Calu3 (cell line): ENCODE measurements at regions of chr10 and their contacts with region 1.

Region 1: GRCh38 chr10:9814285-9814864 is 1203.3 kb upstream of the CELF2 start:
- DNase-seq: no peak
- H3K4me3 Mint-ChIP-seq: no peak overlapping the region
- H3K27ac Mint-ChIP-seq: no peak overlapping the region
- H3K4me1 Mint-ChIP-seq: no peaks in the 10 kb centered on the region
- H3K27me3 Mint-ChIP-seq: no peaks in the 10 kb centered on the region
- CTCF ChIP-seq: no peak

Region 2: DNA sequence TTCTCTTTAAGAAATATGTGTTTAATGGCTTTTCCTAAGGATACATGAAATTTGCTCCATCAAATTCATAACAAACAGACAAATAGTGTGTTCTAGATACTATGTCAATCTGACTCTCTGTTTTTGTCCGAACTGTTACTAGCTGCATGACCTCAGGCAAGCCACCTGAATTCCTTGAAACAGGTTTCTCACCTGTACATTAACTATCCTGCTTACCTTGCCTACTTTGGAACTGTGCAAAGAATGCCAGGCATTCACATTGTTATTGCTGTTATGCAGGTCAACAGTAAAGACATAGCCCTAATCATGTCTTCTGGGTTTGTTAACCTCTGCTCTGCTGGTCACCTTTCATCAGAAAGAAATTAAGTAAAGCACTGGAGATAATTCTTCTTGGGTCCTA is 80.6 kb before region 1 on chr10:
- CTCF ChIA-PET with region 1: no interaction called
- intact Hi-C with region 1: no loop called
- DNase-seq: no peak
- H3K4me3 Mint-ChIP-seq: no peak overlapping the region
- H3K27ac Mint-ChIP-seq: no peak overlapping the region
- H3K4me1 Mint-ChIP-seq: no peaks in the 10 kb centered on the region
- H3K27me3 Mint-ChIP-seq: no peaks in the 10 kb centered on the region
- CTCF ChIP-seq: no peak

Region 3: GRCh38 chr10:9766757-9767156 is 47.6 kb before region 1 on chr10:
- CTCF ChIA-PET with region 1: no interaction called
- intact Hi-C with region 1: no loop called
- DNase-seq: no peak
- H3K4me3 Mint-ChIP-seq: no peak overlapping the region
- H3K27ac Mint-ChIP-seq: no peak overlapping the region
- H3K4me1 Mint-ChIP-seq: no peaks in the 10 kb centered on the region
- H3K27me3 Mint-ChIP-seq: no peaks in the 10 kb centered on the region
- CTCF ChIP-seq: no peak

Region 4: GRCh38 chr10:9781666-9782065 is 32.7 kb before region 1 on chr10:
- CTCF ChIA-PET with region 1: no interaction called
- intact Hi-C with region 1: loop called (anchors 1 kb)
- DNase-seq: no peak
- H3K4me3 Mint-ChIP-seq: no peak overlapping the region
- H3K27ac Mint-ChIP-seq: no peak overlapping the region
- H3K4me1 Mint-ChIP-seq: no peaks in the 10 kb centered on the region
- H3K27me3 Mint-ChIP-seq: no peaks in the 10 kb centered on the region
- CTCF ChIP-seq: no peak